ENCODE measurements at regions of chr17 and their contacts with region 1.

Region 1: GRCh38 chr17:75795820-75796607 is 11.4 kb downstream of the UNK start:
- DNase-seq: no peak
- ATAC-seq: no peak
- H3K4me3 ChIP-seq: no peak overlapping the region
- H3K27ac ChIP-seq: no peak overlapping the region
- H3K4me1 ChIP-seq: peaks cover 0 to 17% (median 0%) of the 10 kb centered on the region in 12 donors
- H3K27me3 ChIP-seq: no peaks in the 10 kb centered on the region
- CTCF ChIP-seq: no peak
- POLR2A ChIP-seq: no peak

Region 2: DNA sequence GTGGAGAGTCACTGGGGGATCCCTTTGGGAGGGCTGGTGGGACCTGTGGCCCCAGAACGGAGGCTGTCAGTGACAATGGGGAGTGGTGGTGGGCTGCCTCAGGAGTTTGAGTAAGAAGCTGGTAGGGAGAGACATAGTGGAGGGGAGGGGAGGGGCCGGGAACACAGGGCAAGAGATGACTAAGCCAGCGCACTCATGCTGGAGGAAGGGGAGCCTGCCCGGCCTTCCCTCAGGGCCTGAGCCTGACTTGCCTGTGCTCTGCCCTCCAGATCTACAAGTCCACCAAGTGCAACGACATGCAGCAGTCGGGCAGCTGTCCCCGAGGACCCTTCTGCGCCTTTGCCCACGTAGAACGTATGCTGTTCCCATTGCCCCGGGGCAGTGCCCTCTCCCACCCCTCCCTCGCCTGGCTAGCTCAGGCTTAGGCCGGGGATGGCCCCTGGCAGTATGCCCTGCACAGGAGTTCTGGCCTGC is 18.9 kb after region 1 on chr17:
- intact Hi-C with region 1: loop called in 1 of 10 experiments (anchors 2 kb)
- DNase-seq: peak in 1 of 5 donors; percentile 40
- ATAC-seq: no peak
- H3K4me3 ChIP-seq: no peak overlapping the region
- H3K27ac ChIP-seq: no peak overlapping the region
- H3K4me1 ChIP-seq: peaks cover 1 to 10% (median 5%) of the 10 kb centered on the region in 12 donors
- H3K27me3 ChIP-seq: no peaks in the 10 kb centered on the region
- CTCF ChIP-seq: no peak
- POLR2A ChIP-seq: no peak

Region 3: DNA sequence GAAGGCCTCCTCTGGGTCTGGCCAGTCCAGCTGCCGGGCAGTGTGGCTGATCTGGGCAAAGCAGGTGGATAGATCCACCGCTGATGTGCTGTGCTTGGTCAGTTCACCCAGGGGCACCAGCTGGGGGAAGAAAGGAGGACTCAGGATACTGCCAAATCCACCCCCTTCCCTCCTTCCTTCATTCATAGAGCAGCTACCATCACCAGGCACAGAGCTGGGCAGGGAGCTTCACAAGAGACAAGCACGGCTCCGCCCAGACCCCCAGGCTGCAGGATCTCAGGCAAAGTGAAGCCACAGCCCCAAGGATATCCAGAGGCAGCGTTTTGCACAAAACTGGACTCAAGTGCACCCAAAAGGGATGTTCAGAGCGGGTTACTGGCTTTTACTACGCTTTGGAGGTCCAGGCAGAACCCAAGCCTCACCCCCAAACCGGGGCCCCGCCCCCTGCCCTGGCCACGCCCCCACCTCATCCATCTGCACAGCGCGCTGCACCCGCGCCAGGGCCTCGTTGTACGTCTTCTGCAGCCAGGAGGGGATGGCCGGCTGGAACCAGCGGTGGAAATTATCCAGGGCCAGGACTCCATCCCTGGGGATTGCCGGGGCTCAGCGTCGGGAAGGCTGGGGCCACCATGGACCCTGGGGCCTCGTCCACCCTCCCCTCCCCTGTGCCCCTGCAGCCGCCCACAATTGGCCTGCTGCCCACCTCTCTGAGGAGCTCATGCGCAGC is 39.1 kb after region 1 on chr17:
- intact Hi-C with region 1: loop called in 1 of 10 experiments (anchors 5 kb)
- DNase-seq: no peak
- ATAC-seq: no peak
- H3K4me3 ChIP-seq: no peak overlapping the region
- H3K27ac ChIP-seq: no peak overlapping the region
- H3K4me1 ChIP-seq: peaks cover 0 to 31% (median 15%) of the 10 kb centered on the region in 12 donors
- H3K27me3 ChIP-seq: no peaks in the 10 kb centered on the region
- CTCF ChIP-seq: no peak
- POLR2A ChIP-seq: no peak

Region 4: DNA sequence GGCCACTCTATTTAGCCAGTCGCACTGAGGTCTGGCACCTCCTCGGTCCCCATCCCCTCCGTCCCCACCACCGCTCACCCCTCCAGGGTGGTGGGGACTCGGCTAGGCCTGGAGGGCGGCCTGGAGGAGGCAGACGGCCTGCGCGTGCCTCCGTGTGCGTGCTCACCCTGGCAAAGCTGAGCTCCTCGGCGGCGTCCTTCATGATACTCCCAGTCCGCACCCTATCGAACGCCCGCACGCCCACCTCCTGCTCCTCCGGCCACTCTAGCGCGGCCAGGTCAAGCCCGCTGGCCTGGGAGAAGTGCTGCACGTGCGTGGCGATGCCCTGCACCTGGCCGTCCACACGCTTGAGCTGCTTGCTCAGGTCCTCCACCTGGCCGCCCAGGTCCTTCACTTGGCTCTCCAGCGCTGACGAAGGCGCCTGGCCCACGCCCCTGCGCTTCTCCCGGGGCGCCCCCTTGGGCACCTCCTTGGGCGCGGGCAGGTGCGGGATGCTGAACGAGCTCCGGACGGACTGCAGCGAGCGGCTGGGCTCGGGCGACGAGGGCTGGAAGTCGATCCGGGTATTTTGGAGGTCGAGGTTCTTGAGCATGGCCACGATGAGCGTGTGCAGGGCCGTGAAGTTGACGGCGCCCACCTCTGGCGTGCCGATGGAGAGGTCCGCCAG is 511.4 kb after region 1 on chr17:
- intact Hi-C with region 1: no loop called
- DNase-seq: no peak
- ATAC-seq: peak in 1 of 4 donors; percentile 10
- H3K4me3 ChIP-seq: no peak overlapping the region
- H3K27ac ChIP-seq: no peak overlapping the region
- H3K4me1 ChIP-seq: peaks cover 0 to 3% (median 0%) of the 10 kb centered on the region in 12 donors
- H3K27me3 ChIP-seq: no peaks in the 10 kb centered on the region
- CTCF ChIP-seq: no peak
- POLR2A ChIP-seq: no peak

Measured in heart left ventricle (tissue), 16 donors.